Activated CD4-positive, alpha-beta memory T cell treated with anti-CD3 and anti-CD28 coated beads, Interleukin-2, amount 10 ng/mL, durations not matched to agents 7 days and 5 days (primary cell): ENCODE measurements at regions of chr2 and their contacts with region 1.

Region 1: DNA sequence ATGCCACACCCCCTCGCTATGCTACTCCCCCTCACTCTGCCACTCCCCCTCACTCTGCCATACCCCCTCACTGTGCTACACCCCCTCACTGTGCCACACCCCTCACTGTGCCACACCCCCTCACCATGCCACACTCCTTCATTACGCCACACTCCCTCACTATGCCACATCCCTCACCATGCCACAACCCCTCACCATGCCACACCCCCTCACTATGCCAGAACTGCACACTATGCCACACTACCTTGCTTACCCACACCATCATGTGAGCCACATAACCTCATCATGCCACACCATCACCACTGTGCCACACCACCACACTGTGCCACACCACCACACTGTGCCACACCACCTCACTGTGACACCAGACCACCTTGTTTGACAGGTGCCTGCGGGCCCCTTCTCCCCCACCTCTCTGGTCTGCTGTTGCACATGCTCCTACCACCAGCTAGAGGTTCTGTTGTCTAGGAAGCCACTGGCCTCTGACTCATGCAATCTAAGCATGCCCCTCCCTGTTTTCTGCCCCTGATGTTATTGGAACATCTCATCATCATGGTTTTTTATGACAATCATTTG is 22.0 kb downstream of the MARCHF4 start:
- DNase-seq: peak; percentile 46
- H3K4me3 Mint-ChIP-seq: no peak overlapping the region
- H3K27ac Mint-ChIP-seq: peak overlapping the region; percentile 33
- H3K4me1 Mint-ChIP-seq: peaks cover 65% of the 10 kb centered on the region
- H3K27me3 Mint-ChIP-seq: no peaks in the 10 kb centered on the region

Region 2: GRCh38 chr2:216328347-216328746 is 22.0 kb before region 1 on chr2:
- CTCF ChIA-PET with region 1: no interaction called
- POLR2A ChIA-PET with region 1: no interaction called
- DNase-seq: no peak
- H3K4me3 Mint-ChIP-seq: no peak overlapping the region
- H3K27ac Mint-ChIP-seq: no peak overlapping the region
- H3K4me1 Mint-ChIP-seq: no peaks in the 10 kb centered on the region
- H3K27me3 Mint-ChIP-seq: peaks cover 1% of the 10 kb centered on the region

Region 3: DNA sequence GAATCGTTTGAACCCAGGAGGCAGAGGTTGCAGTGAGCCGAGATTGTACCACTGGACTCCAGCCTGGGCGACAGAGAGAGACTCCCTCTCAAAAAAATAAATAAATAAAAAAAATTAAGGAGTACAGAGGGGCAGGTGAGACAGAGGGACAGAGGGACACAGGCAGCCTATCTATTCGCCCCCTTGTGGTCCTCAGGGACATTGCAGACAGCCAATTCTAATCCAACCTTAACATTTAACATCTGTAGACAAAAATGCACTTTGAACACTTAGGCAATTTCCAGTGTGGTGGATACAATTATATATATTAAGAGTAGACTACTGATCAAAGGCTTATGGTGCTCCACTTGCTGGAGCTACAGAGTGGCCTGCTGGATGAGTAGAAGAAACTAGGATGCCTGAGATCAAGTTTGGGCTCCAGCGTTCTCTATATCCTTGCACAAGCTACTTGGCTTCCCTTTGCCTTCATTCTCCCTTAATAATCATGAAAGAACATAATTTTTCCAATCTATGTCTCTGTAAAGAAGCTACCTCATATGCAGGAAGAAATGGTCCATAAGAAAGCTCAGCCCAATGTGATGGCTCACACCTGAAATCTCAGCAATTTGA is 53.8 kb after region 1 on chr2:
- CTCF ChIA-PET with region 1: interaction called, 15 read pairs
- POLR2A ChIA-PET with region 1: no interaction called
- DNase-seq: peak; percentile 45
- H3K4me3 Mint-ChIP-seq: no peak overlapping the region
- H3K27ac Mint-ChIP-seq: no peak overlapping the region
- H3K4me1 Mint-ChIP-seq: no peaks in the 10 kb centered on the region
- H3K27me3 Mint-ChIP-seq: peaks cover 18% of the 10 kb centered on the region

Region 4: GRCh38 chr2:216412022-216412999 is 62.0 kb after region 1 on chr2 and contains the start of gene SMARCAL1:
- CTCF ChIA-PET with region 1: no interaction called
- POLR2A ChIA-PET with region 1: interaction called, 15 read pairs
- DNase-seq: peak; percentile 99
- H3K4me3 Mint-ChIP-seq: peak within 1 kb of the TSS; percentile 92
- H3K27ac Mint-ChIP-seq: peak within 1 kb of the TSS; percentile 79
- H3K4me1 Mint-ChIP-seq: peaks cover 31% of the 10 kb centered on the region
- H3K27me3 Mint-ChIP-seq: peaks cover 8% of the 10 kb centered on the region
- total RNA-seq, gene SMARCAL1: 23.6 to 27.5 TPM

Region 5: GRCh38 chr2:216752855-216753505 is 402.7 kb after region 1 on chr2:
- CTCF ChIA-PET with region 1: no interaction called
- POLR2A ChIA-PET with region 1: no interaction called
- DNase-seq: no peak
- H3K4me3 Mint-ChIP-seq: no peak overlapping the region
- H3K27ac Mint-ChIP-seq: no peak overlapping the region
- H3K4me1 Mint-ChIP-seq: no peaks in the 10 kb centered on the region
- H3K27me3 Mint-ChIP-seq: peaks cover 31% of the 10 kb centered on the region

Region 6: GRCh38 chr2:216857131-216857550 is 506.8 kb after region 1 on chr2:
- CTCF ChIA-PET with region 1: no interaction called
- POLR2A ChIA-PET with region 1: no interaction called
- DNase-seq: peak; percentile 20
- H3K4me3 Mint-ChIP-seq: no peak overlapping the region
- H3K27ac Mint-ChIP-seq: no peak overlapping the region
- H3K4me1 Mint-ChIP-seq: peaks cover 19% of the 10 kb centered on the region
- H3K27me3 Mint-ChIP-seq: peaks cover 4% of the 10 kb centered on the region